ENCODE measurements at regions of chr11 and their contacts with region 1.

Region 1: DNA sequence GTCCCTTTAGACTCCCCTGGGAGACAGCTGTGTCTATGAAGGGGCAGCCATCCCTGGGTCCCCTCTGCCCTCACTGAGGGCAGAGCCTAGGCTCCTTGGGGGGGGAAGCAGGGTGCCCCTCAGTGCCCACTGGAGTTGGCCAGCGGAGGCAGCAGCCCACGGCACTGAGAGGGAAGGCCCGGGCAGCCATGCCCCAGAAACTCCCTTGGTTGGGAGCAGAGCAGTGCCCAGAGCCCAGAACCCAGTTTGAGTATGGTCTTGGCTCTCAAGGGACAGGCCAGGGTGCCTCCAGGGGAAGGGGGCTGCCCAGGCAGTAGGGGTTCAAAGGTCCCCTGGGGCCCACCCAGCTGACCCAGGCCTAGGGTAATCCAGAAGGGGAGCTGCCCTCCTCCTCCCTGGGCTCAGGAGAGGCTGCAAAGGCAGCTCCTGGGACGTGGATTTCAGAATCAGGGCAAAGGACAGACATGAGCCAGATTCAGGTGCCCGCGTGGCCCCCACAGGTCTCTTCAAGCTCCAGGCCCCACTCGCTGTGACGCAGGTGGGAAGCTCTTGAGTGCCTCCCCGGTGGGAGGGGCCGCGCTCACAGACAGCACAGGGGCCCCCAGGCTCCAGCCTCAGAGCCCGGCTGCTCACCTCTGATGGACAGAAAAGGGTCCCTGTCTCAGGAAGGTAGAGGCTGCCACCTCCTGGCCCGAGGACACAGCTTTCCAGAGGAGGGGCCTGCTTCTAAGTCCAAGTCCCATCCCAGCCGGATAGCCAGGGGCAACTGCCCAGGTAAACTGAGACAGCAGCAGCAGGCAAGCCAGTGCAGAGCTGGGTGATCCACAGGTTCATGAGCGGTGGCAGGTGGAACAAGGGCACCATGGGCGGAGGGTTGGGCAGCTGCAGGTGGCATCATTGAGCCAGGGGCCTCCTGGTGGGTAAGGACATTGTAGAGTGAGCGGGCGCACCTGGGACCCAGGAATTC is 2.6 kb downstream of the C11orf21 start:
- DNase-seq: peak; percentile 23
- ATAC-seq: no peak
- H3K4me3 Mint-ChIP-seq: peak overlapping the region; percentile 60
- H3K27ac Mint-ChIP-seq: peak overlapping the region; percentile 81
- H3K4me1 Mint-ChIP-seq: peaks cover 62% of the 10 kb centered on the region
- H3K27me3 Mint-ChIP-seq: no peaks in the 10 kb centered on the region
- CTCF ChIP-seq: no peak

Region 2: GRCh38 chr11:2196970-2197770 is 101.9 kb before region 1 on chr11:
- CTCF ChIA-PET with region 1: interaction called, 18 read pairs
- POLR2A ChIA-PET with region 1: interaction called, 3 read pairs
- intact Hi-C with region 1: loop called (anchors 1 kb)
- DNase-seq: peak; percentile 61
- ATAC-seq: peak; percentile 97
- H3K4me3 Mint-ChIP-seq: no peak overlapping the region
- H3K27ac Mint-ChIP-seq: peak overlapping the region; percentile 9
- H3K4me1 Mint-ChIP-seq: peaks cover 6% of the 10 kb centered on the region
- H3K27me3 Mint-ChIP-seq: peaks cover 10% of the 10 kb centered on the region
- CTCF ChIP-seq: peak; percentile 31

Region 3: GRCh38 chr11:2269601-2270321 is 29.3 kb before region 1 on chr11:
- CTCF ChIA-PET with region 1: interaction called, 5 read pairs
- POLR2A ChIA-PET with region 1: interaction called, 16 read pairs
- intact Hi-C with region 1: loop called (anchors 1 kb)
- DNase-seq: peak; percentile 55
- ATAC-seq: peak; percentile 23
- H3K4me3 Mint-ChIP-seq: peak overlapping the region; percentile 70
- H3K27ac Mint-ChIP-seq: peak overlapping the region; percentile 74
- H3K4me1 Mint-ChIP-seq: peaks cover 41% of the 10 kb centered on the region
- H3K27me3 Mint-ChIP-seq: peaks cover 6% of the 10 kb centered on the region
- CTCF ChIP-seq: no peak

Region 4: GRCh38 chr11:2280208-2280607 is 18.9 kb before region 1 on chr11:
- CTCF ChIA-PET with region 1: no interaction called
- POLR2A ChIA-PET with region 1: no interaction called
- intact Hi-C with region 1: no loop called
- DNase-seq: no peak
- ATAC-seq: no peak
- H3K4me3 Mint-ChIP-seq: no peak overlapping the region
- H3K27ac Mint-ChIP-seq: no peak overlapping the region
- H3K4me1 Mint-ChIP-seq: no peaks in the 10 kb centered on the region
- H3K27me3 Mint-ChIP-seq: peaks cover 12% of the 10 kb centered on the region
- CTCF ChIP-seq: no peak

Region 5: DNA sequence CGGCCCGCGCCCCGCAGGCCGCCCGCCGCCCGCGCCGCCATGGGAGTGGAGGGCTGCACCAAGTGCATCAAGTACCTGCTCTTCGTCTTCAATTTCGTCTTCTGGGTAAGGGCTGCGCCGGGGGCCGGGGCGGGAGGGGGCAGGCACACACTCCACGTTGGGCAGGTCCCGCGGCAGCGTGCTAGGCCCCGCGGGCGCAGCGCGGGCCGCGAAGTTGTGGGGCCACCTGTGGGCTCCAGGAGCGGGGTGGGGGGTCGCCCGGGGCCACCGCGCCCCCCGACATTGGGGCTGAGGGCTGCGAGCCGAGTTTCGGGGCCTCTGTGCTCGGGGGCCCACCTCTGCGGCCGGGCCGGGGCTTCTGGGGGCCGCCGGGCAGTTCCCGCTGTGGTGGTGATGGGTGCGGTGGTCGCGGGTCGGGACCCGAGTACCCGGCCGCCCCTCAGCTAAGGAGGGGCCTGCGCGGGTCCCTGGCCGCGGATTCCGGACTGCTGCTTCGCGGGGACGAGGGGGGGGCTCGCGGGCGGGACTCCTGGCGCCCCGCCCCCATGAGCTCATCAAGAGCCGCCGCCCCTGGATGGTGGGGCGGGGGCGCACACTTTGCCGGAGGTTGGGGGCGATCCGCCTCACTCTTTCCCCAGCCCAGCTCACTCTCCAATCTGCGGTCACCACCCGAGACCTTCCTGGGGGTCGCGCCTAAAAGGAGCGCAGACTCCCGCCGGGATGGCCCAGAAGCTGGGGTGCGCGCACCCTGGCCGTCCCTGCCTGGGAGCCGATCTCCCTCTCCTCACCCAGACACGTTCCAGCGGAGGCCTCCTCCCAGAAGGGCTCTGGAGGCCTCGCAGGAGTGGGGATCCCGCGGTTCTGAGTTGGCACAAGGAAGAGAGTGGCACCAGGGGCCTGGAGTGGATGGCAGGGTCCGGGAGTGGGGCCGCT is 78.7 kb after region 1 on chr11:
- CTCF ChIA-PET with region 1: no interaction called
- POLR2A ChIA-PET with region 1: interaction called, 11 read pairs
- intact Hi-C with region 1: loop called (anchors 2 kb)
- DNase-seq: no peak
- ATAC-seq: peak; percentile 43
- H3K4me3 Mint-ChIP-seq: peak overlapping the region; percentile 82
- H3K27ac Mint-ChIP-seq: peak overlapping the region; percentile 86
- H3K4me1 Mint-ChIP-seq: peaks cover 46% of the 10 kb centered on the region
- H3K27me3 Mint-ChIP-seq: no peaks in the 10 kb centered on the region
- CTCF ChIP-seq: no peak

Region 6: DNA sequence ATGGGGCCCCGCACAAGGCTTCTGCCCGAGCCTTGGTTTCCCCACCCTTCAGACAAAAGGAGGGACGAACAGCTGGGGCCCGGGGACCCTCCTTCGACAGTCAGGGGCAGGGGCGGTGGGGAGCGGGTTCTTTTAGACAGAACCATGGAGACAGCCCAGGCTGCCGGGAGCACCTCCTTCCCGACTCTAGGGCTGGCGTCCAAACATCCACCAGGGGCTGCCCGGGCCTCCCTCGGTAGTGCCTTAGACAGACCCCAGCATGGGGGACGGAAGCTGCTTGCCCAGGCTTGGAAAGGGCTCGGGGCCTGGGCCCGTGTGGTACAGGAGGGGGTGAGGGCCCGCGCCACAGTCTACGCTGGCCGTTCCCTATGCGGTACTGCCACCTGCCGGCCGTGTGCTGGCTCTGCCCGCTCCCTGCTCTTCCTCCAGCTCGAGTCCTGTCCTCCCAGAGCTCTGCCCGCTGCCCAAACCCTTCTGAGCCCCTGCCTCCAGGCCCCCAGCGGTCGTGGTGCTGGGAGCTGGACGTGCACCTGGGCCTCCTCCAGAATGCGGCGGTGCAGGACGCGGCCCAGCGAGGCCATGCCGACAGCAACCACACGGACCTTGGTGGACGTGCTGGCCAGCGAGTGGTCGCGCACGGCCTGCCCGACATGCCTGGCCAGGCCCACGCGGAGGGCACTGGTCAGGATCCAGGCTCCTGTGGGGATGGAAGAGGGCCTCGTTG is 121.6 kb after region 1 on chr11:
- CTCF ChIA-PET with region 1: interaction called, 321 read pairs
- POLR2A ChIA-PET with region 1: interaction called, 11 read pairs
- intact Hi-C with region 1: no loop called
- DNase-seq: peak; percentile 69
- ATAC-seq: peak; percentile 97
- H3K4me3 Mint-ChIP-seq: no peak overlapping the region
- H3K27ac Mint-ChIP-seq: no peak overlapping the region
- H3K4me1 Mint-ChIP-seq: peaks cover 6% of the 10 kb centered on the region
- H3K27me3 Mint-ChIP-seq: no peaks in the 10 kb centered on the region
- CTCF ChIP-seq: peak; percentile 32

Region 7: DNA sequence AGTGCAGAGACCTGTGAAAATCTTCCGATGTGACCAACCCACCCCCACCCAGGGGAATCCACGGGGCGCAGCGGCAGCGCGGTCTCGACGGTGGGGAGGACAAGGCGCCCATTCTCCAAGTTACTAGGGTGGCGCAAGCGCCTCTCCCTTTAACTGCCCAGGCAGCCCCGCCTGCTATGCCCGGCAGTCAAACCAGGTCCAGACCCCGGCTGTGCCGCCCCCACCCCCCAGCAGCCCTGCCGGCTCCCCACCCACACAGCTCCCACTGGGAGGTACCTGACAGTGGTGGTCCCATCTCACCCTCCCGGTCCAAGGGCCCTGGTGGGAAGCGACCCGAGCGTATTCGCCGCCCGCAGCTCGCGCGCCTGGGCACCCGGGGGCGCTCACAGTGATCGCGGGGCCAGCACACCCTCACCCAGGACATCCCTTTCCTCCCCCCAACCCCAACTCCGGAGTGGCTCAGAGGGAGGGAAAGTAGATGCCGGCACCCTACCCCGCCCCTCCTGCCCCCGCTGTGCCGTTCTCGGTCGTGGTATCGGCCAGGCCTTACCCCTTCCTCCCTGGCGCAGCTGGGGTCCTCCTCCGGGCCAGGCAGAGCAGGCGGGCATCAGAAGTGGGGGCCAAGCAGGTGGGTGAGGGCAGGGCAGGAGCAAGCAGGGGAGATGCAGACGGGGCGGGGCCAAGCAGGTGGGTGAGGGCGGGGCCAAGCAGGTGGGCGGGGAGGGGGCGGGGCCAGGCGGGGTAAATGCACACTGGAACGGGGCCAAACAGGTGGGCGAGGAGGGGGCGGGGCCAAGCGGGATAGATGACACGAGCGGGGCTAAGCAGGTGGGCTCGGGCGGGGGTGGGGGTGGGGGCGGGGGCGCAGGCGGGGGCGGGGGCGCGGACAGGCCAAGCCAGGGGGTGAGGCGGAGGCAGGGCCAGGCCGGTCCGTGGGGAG is 145.1 kb after region 1 on chr11 and contains the start of gene TRPM5:
- CTCF ChIA-PET with region 1: no interaction called
- POLR2A ChIA-PET with region 1: no interaction called
- intact Hi-C with region 1: no loop called
- DNase-seq: peak; percentile 66
- ATAC-seq: peak; percentile 56
- H3K4me3 Mint-ChIP-seq: peak within 1 kb of the TSS; percentile 85
- H3K27ac Mint-ChIP-seq: peak within 1 kb of the TSS; percentile 65
- H3K4me1 Mint-ChIP-seq: peaks cover 38% of the 10 kb centered on the region
- H3K27me3 Mint-ChIP-seq: no peaks in the 10 kb centered on the region
- CTCF ChIP-seq: no peak
- total RNA-seq, gene TRPM5: not detected in 2 replicates

Region 8: GRCh38 chr11:2901854-2902783 is 603.0 kb after region 1 on chr11:
- CTCF ChIA-PET with region 1: no interaction called
- POLR2A ChIA-PET with region 1: no interaction called
- intact Hi-C with region 1: loop called (anchors 5 kb)
- DNase-seq: peak; percentile 80
- ATAC-seq: peak; percentile 97
- H3K4me3 Mint-ChIP-seq: peak overlapping the region; percentile 80
- H3K27ac Mint-ChIP-seq: peak overlapping the region; percentile 24
- H3K4me1 Mint-ChIP-seq: peaks cover 28% of the 10 kb centered on the region
- H3K27me3 Mint-ChIP-seq: no peaks in the 10 kb centered on the region
- CTCF ChIP-seq: no peak

Measured in activated B cell treated with CpG ODN at 0.5 μM for 24 hours (primary cell).